Ascending aorta (tissue), 2 donors: ENCODE measurements at regions of chr10 and their contacts with region 1.

Region 1: DNA sequence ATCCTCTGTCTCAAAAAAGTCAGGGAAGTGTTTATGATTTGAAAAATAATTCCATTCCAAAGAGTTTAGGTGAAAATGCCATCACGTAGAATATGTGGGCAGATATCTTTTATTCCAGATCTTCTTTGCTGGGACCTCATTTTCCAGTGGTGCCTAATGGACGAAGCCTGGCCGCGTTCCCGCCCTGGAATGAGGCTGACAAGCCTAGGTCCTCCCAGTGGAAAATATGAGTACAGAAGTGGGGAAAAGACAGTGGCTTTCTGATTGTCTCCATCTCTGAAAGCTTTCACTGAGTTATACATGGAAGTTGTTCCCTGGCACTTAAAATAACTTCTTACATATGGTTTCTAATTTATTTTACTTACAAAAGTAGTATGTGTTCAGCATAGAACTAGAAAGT is 139.4 kb downstream of the TACC2 start:
- DNase-seq: peak in 1 of 2 donors; percentile 80
- H3K4me3 ChIP-seq: peak overlapping the region; percentile 44 to 53
- H3K27ac ChIP-seq: peak overlapping the region; percentile 82 to 88
- H3K4me1 ChIP-seq: peaks cover 0 to 34% of the 10 kb centered on the region in 2 donors
- H3K27me3 ChIP-seq: no peaks in the 10 kb centered on the region
- CTCF ChIP-seq: no peak

Region 2: DNA sequence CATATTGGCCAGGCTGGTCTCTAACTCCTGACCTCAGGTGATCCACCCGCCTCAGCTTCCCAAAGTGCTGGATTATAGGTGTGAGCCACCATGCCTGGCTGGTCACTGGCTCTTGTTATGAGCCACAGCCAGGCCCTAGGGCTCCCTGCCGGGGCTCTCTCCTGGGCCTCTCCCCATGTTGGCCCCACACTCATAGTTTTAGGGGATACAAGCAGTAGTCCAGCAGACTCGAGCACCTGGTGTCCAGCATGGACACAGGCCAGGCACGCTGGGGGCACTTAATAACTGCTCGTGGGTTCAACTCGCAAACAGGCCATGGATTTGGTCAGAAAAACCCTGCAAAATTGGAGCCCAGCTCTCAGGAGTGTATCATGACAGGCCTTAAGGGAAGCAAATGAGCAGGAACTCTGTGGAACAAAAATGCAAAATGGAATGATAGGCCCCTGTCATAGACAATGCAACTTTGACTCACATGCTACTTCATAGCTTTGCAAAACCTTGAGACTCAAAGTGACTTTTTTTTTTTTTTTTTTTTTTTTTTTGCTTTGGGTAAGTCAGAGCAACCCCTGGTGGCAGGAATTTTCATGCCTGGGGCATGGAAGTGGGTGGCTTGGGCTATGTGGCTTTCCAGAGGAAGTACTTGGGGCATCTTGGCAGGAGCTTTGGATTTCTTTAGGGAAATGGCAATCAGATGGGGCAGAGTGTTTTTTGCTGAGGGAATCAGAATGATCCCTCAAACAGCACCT is 76.9 kb before region 1 on chr10:
- intact Hi-C with region 1: no loop called
- DNase-seq: peak in 1 of 2 donors; percentile 84
- H3K4me3 ChIP-seq: no peak overlapping the region
- H3K27ac ChIP-seq: peak overlapping the region; percentile 24 to 70
- H3K4me1 ChIP-seq: peaks cover 3 to 4% of the 10 kb centered on the region in 2 donors
- H3K27me3 ChIP-seq: no peaks in the 10 kb centered on the region
- CTCF ChIP-seq: peak; percentile 15 to 67 (median 67)

Region 3: DNA sequence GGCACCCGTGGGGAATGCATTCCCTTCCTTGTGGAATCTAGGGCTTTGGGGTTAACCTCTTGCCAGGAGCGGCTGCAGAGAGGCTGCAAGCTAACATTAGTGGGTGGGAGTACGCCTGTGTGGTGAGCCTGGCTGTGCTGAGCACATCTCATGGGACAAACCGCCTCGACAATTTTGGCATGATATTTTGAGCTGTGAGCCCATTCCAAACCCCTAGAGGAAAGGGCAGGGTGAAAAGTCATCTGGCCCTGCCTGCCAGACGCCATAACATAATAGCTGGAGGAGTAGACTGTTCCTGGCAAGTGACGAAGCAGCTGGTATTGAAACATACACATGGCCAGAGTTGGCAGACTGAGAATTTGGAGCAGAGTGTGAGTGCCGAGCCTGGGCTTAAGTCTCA is 29.4 kb before region 1 on chr10:
- intact Hi-C with region 1: no loop called
- DNase-seq: peak in 1 of 2 donors; percentile 85
- H3K4me3 ChIP-seq: no peak overlapping the region
- H3K27ac ChIP-seq: peak overlapping the region; percentile 62 to 77
- H3K4me1 ChIP-seq: peaks cover 4 to 37% of the 10 kb centered on the region in 2 donors
- H3K27me3 ChIP-seq: no peaks in the 10 kb centered on the region
- CTCF ChIP-seq: no peak

Region 4: DNA sequence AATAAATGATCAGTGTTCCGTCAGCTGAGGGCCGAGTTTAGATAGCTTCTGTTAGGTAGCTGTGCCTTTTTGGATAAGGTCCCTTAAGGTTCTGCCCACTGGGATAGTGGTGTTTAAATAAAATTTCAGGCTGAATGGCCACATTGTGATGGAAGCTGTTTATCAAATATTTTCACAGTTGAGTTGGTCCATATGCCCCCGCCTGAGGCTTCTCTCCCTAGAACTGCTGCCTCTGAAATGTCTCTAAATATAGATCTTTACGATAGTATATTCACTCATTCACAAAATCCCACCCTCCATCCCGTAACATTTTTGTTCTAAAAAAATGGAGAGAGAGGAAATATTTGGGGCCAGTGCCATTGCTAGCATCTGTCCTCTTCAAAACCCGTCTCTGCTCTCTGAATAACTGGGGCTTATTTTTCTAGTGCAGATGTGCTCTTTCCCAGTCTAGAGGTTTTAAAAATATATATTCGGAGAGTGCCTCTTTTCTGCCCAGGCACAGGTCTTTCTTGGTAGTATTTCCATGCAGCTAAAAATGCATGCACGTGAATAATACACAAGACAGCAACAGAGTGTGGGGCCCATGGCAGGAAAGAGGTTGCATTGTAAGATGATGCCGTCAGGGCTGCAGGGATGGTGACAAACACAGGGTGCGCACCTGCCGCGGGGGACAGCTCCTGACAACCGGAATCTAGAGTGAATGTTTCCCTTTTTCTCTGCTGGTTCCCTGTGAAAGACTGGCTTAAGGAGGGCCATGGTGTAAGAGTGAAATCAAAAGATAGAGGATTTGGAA is 37.3 kb after region 1 on chr10:
- intact Hi-C with region 1: loop called (anchors 1 kb)
- DNase-seq: no peak
- H3K4me3 ChIP-seq: no peak overlapping the region
- H3K27ac ChIP-seq: no peak overlapping the region
- H3K4me1 ChIP-seq: peaks cover 0 to 14% of the 10 kb centered on the region in 2 donors
- H3K27me3 ChIP-seq: no peaks in the 10 kb centered on the region
- CTCF ChIP-seq: no peak